MCF 10A (cell line): ENCODE measurements at regions of chr19 and their contacts with region 1.

Region 1: GRCh38 chr19:9621156-9622037 is at the start of gene ZNF561:
- DNase-seq: peak; percentile 75
- H3K4me3 Mint-ChIP-seq: peak within 1 kb of the TSS; percentile 91
- H3K27ac Mint-ChIP-seq: peak within 1 kb of the TSS; percentile 99
- H3K4me1 Mint-ChIP-seq: peaks cover 20% of the 10 kb centered on the region
- H3K27me3 Mint-ChIP-seq: no peaks in the 10 kb centered on the region
- CTCF ChIP-seq: no peak
- total RNA-seq, gene ZNF561: 37.0 and 37.7 TPM in 2 replicates

Region 2: DNA sequence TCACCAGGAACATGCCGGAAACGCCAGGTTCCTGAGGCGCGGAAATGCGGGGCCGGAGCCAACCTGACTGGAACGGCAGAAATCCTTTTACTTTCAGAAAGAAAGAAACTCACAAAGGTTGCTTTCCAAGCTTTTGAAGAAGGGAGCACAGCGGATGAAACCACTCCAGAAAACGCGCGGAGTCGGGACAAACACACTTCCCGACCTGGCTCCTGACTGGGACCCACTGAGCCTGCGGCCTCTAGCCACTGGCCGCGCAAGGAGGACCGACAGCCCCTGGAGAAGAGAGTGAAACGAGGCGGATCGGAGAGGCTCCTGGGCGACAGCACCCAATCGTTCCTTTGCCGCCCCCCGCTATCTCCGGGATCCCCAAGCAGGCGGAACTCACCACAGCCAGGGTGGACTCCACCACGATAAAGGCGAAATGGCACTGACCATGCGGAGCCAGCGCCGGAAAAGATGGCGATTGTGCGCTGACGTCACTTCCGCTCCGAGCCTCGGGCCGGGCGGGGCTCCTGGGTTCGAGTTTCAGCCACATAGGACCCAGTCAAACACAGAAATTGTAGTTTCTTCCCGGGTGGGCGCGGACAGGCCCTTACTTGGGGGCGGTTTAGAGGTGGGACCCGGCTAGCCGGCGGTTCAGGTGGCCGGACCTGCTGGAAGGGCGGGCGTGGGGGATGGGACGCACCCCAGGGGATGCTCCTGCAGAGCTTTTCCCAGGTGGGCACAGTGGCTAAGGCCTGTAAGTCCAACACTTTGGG is 37.1 kb before region 1 on chr19 and contains the start of gene ZNF121:
- CTCF ChIA-PET with region 1: interaction called, 25 read pairs
- POLR2A ChIA-PET with region 1: interaction called, 71 read pairs
- intact Hi-C with region 1: loop called (anchors 1 kb)
- DNase-seq: peak; percentile 83
- H3K4me3 Mint-ChIP-seq: peak within 1 kb of the TSS; percentile 93
- H3K27ac Mint-ChIP-seq: peak within 1 kb of the TSS; percentile 98
- H3K4me1 Mint-ChIP-seq: peaks cover 5% of the 10 kb centered on the region
- H3K27me3 Mint-ChIP-seq: no peaks in the 10 kb centered on the region
- CTCF ChIP-seq: no peak
- total RNA-seq, gene ZNF121: 51.9 and 63.9 TPM in 2 replicates

Region 3: GRCh38 chr19:9610484-9611113 is 10.8 kb before region 1 on chr19:
- CTCF ChIA-PET with region 1: interaction called, 3 read pairs
- POLR2A ChIA-PET with region 1: interaction called, 37 read pairs
- intact Hi-C with region 1: no loop called
- DNase-seq: no peak
- H3K4me3 Mint-ChIP-seq: no peak overlapping the region
- H3K27ac Mint-ChIP-seq: no peak overlapping the region
- H3K4me1 Mint-ChIP-seq: no peaks in the 10 kb centered on the region
- H3K27me3 Mint-ChIP-seq: no peaks in the 10 kb centered on the region
- CTCF ChIP-seq: no peak

Region 4: DNA sequence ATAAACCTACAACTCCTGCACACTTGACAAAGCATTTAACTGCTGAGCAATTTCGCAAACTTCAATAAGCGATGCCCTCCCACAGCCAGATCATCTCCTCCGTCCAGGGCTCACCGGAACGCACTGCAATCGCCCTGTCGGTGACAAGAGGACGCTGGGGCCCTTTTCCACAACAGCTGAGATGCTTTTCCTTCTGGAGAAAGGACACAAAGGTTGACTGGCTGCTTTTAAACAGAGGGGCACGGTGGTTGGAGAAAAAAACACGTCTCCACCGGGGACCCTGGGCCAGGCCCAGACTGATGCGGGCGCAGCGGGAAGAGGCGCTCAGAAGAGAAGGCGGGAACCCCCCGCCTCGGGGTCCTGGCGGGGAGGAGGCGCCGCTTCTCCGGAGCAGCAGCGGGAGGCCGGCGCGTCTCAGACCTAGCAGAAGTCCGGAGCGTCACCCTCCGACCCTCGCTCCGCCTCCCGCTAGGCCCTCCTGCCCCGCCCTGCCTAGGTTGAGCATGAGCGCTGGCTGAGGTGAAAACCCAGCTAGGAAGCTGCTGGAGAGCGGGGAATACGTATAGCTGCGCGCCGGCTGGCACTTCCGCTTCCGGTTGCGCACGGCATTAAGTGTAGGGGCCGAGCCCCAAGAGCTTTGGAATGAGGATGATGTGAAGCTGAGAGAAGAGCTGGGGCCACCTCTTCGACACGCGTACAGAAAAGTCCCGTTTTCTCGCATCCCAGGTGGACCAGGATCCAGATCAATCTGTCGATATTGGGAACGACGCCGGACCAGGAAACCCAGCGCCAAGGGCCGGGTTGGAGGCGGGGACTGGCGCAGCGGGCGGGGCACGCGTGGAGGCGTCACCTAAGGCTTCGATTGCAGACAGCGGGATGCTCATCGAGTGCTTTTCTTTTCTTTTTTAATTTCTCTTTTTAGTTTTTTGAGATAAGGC is 147.0 kb after region 1 on chr19 and contains the start of gene ZNF846:
- CTCF ChIA-PET with region 1: interaction called, 8 read pairs
- POLR2A ChIA-PET with region 1: interaction called, 46 read pairs
- intact Hi-C with region 1: no loop called
- DNase-seq: peak; percentile 97
- H3K4me3 Mint-ChIP-seq: peak within 1 kb of the TSS; percentile 93
- H3K27ac Mint-ChIP-seq: peak within 1 kb of the TSS; percentile 98
- H3K4me1 Mint-ChIP-seq: no peaks in the 10 kb centered on the region
- H3K27me3 Mint-ChIP-seq: no peaks in the 10 kb centered on the region
- CTCF ChIP-seq: no peak
- total RNA-seq, gene ZNF846: 3.2 and 3.3 TPM in 2 replicates

Region 5: GRCh38 chr19:9796113-9796773 is 174.8 kb after region 1 on chr19:
- CTCF ChIA-PET with region 1: interaction called, 31 read pairs
- POLR2A ChIA-PET with region 1: interaction called, 4 read pairs
- intact Hi-C with region 1: loop called (anchors 1 kb)
- DNase-seq: peak; percentile 94
- H3K4me3 Mint-ChIP-seq: no peak overlapping the region
- H3K27ac Mint-ChIP-seq: peak overlapping the region; percentile 59
- H3K4me1 Mint-ChIP-seq: peaks cover 6% of the 10 kb centered on the region
- H3K27me3 Mint-ChIP-seq: no peaks in the 10 kb centered on the region
- CTCF ChIP-seq: peak; percentile 67